Naive thymus-derived CD4-positive, alpha-beta T cell (primary cell): ENCODE measurements at regions of chr17 and their contacts with region 1.

Region 1: DNA sequence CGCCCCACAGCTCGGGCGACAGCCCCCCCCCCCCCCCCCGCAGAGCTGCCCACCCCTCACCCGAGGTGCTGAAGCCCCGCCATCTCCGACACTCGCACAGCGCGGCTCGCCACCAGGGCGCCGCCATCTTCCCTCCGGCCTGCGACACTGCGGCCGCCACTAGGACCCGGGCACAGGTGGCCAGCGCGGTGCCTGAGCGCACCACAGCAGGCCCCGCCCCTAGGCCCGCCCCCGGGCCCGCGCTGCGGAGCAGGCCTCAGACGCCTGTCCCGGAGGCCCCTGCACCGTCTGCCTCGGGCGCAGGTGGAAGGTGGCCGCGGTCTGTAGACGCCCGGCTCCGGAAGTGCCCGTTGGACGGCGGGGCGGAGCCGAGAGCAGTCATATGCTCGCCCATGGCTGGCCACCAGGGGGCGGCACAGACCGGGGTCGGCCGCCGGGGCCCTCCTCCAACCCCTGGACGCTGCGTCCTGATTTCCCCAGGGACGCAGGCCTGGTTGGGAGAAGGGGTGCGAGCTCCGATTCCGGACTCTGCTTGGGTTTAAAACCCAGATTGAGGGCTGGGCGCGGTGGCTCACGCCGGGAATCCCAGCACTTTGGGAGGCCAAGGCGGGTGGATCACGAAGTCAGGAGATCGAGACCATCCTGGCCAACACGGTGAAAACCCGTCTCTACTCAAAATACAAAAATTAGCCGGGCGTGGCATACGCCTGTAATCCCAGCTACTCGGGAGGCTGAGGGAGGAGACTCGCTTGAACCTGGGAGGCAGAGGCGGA is at the start of gene MRPL38:
- DNase-seq: peak; percentile 88 to 97 (median 91)
- ATAC-seq: peak; percentile 99
- H3K4me3 ChIP-seq: peak within 1 kb of the TSS; percentile 72
- H3K4me3 Mint-ChIP-seq: peak within 1 kb of the TSS; percentile 83 to 97 (median 92)
- H3K27ac ChIP-seq: peak within 1 kb of the TSS; percentile 85
- H3K27ac Mint-ChIP-seq: peak within 1 kb of the TSS; percentile 90 to 97 (median 95)
- H3K4me1 ChIP-seq: peaks cover 0 to 5% of the 10 kb centered on the region in 2 donors
- H3K4me1 Mint-ChIP-seq: peaks cover 2 to 16% (median 14%) of the 10 kb centered on the region in 7 donors
- H3K27me3 ChIP-seq: no peaks in the 10 kb centered on the region
- H3K27me3 Mint-ChIP-seq: no peaks in the 10 kb centered on the region
- total RNA-seq, gene MRPL38: 81.0 to 154 (median 128) TPM

Region 2: DNA sequence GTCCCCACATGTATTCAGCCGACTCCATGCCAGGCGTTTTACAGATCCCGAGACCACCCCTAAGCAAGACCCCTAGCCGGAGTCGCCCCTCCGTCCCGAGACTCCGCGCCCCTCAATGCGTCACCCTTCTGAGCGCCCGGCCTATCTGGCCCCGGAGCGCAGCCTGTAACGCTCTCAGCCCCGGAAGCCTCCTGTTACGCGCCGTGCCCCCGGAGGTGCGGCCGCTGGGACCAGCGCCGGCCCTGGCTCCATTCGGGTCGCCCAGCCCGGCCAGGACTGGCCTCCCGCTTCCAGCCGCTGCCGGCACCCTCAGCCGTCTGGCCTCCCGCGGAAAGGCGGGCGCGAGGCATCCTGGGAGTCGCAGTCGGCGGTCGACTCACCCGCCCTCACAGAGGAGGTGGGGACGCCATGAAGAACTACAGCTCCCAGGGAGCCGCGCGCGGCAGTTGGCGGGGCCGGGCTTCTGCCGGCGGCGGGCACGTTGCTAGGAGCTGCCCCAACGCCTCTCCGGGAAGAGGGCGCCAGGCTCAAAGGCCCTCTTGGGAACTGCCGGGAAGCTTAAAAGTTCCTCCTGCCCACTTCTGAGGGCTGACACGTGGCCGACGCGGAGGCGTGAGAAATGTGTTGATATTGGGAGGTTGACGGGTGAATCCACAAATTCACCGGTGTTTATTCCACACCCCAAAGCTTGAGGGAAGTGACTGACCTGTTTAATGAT is 35.9 kb after region 1 on chr17 and contains the start of gene FBF1:
- CTCF ChIA-PET with region 1: no interaction called
- POLR2A ChIA-PET with region 1: interaction called, 3 read pairs
- intact Hi-C with region 1: loop called (anchors 1 kb)
- DNase-seq: peak; percentile 74 to 92 (median 82)
- ATAC-seq: peak; percentile 100
- H3K4me3 ChIP-seq: peak within 1 kb of the TSS; percentile 89
- H3K4me3 Mint-ChIP-seq: peak within 1 kb of the TSS; percentile 77 to 93 (median 90)
- H3K27ac ChIP-seq: peak within 1 kb of the TSS; percentile 86
- H3K27ac Mint-ChIP-seq: peak within 1 kb of the TSS; percentile 74 to 94 (median 89)
- H3K4me1 ChIP-seq: peaks cover 5 to 11% of the 10 kb centered on the region in 2 donors
- H3K4me1 Mint-ChIP-seq: peaks cover 9 to 19% (median 11%) of the 10 kb centered on the region in 7 donors
- H3K27me3 ChIP-seq: no peaks in the 10 kb centered on the region
- H3K27me3 Mint-ChIP-seq: no peaks in the 10 kb centered on the region
- total RNA-seq, gene FBF1: 19.9 to 48.1 (median 29.0) TPM

Region 3: GRCh38 chr17:76005263-76006149 is 100.6 kb after region 1 on chr17:
- CTCF ChIA-PET with region 1: interaction called, 33 read pairs
- POLR2A ChIA-PET with region 1: interaction called, 10 read pairs
- intact Hi-C with region 1: loop called in 1 of 2 experiments (anchors 1 kb)
- DNase-seq: peak; percentile 57 to 87 (median 73)
- ATAC-seq: peak; percentile 77
- H3K4me3 ChIP-seq: no peak overlapping the region
- H3K4me3 Mint-ChIP-seq: no peak overlapping the region
- H3K27ac ChIP-seq: no peak overlapping the region
- H3K27ac Mint-ChIP-seq: peak overlapping the region in 3 of 9 donors; percentile 47 to 65 (median 55)
- H3K4me1 ChIP-seq: no peaks in the 10 kb centered on the region
- H3K4me1 Mint-ChIP-seq: peaks cover 0 to 7% (median 4%) of the 10 kb centered on the region in 7 donors
- H3K27me3 ChIP-seq: no peaks in the 10 kb centered on the region
- H3K27me3 Mint-ChIP-seq: no peaks in the 10 kb centered on the region

Region 4: GRCh38 chr17:76053246-76054116 is 148.5 kb after region 1 on chr17:
- CTCF ChIA-PET with region 1: no interaction called
- POLR2A ChIA-PET with region 1: no interaction called
- intact Hi-C with region 1: no loop called
- DNase-seq: no peak
- ATAC-seq: no peak
- H3K4me3 ChIP-seq: no peak overlapping the region
- H3K4me3 Mint-ChIP-seq: no peak overlapping the region
- H3K27ac ChIP-seq: no peak overlapping the region
- H3K27ac Mint-ChIP-seq: peak overlapping the region in 4 of 9 donors; percentile 13 to 67 (median 32)
- H3K4me1 ChIP-seq: no peaks in the 10 kb centered on the region
- H3K4me1 Mint-ChIP-seq: peaks cover 11 to 33% (median 25%) of the 10 kb centered on the region in 7 donors
- H3K27me3 ChIP-seq: no peaks in the 10 kb centered on the region
- H3K27me3 Mint-ChIP-seq: no peaks in the 10 kb centered on the region

Region 5: DNA sequence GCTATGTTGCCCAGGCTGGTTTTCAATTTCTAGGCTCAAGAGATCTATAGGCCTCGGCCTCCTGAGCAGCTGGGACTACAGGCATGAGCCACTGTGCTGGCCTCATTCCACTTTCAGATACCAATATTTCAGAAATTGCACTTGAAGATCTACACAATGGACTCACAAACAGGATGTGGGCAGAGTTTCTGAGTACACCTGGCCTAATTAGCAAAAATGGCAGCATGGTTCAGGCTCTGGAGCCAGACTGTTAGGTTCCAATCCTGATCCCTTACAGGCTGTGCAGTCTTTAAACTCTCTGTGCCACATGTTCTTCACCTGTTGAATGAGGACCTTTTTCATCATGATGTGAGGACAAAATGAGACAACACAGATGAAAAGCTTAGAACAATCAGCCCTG is 303.2 kb after region 1 on chr17:
- CTCF ChIA-PET with region 1: no interaction called
- POLR2A ChIA-PET with region 1: no interaction called
- intact Hi-C with region 1: no loop called
- DNase-seq: no peak
- ATAC-seq: no peak
- H3K4me3 ChIP-seq: no peak overlapping the region
- H3K4me3 Mint-ChIP-seq: peak overlapping the region in 6 of 10 donors; percentile 2 to 48 (median 16)
- H3K27ac ChIP-seq: peak overlapping the region; percentile 32
- H3K27ac Mint-ChIP-seq: peak overlapping the region in 7 of 9 donors; percentile 3 to 76 (median 70)
- H3K4me1 ChIP-seq: peaks cover 23 to 27% of the 10 kb centered on the region in 2 donors
- H3K4me1 Mint-ChIP-seq: peaks cover 19 to 70% (median 61%) of the 10 kb centered on the region in 7 donors
- H3K27me3 ChIP-seq: no peaks in the 10 kb centered on the region
- H3K27me3 Mint-ChIP-seq: no peaks in the 10 kb centered on the region